Spleen (tissue), 13 donors: ENCODE measurements at regions of chr14 and their contacts with region 1.

Region 1: GRCh38 chr14:73467377-73467776 is 9.0 kb upstream of the NUMB start:
- DNase-seq: peak; percentile 86
- H3K4me3 ChIP-seq: peak overlapping the region in 1 of 8 donors; percentile 63
- H3K27ac ChIP-seq: peak overlapping the region in 6 of 8 donors; percentile 82 to 93 (median 88)
- H3K4me1 ChIP-seq: peaks cover 20 to 68% (median 48%) of the 10 kb centered on the region in 6 donors
- H3K27me3 ChIP-seq: no peaks in the 10 kb centered on the region
- CTCF ChIP-seq: no peak
- POLR2A ChIP-seq: no peak

Region 2: GRCh38 chr14:73295198-73295796 is 172.1 kb before region 1 on chr14:
- intact Hi-C with region 1: loop called (anchors 5 kb)
- DNase-seq: no peak
- H3K4me3 ChIP-seq: no peak overlapping the region
- H3K27ac ChIP-seq: no peak overlapping the region
- H3K4me1 ChIP-seq: peaks cover 0 to 4% (median 0%) of the 10 kb centered on the region in 6 donors
- H3K27me3 ChIP-seq: no peaks in the 10 kb centered on the region
- CTCF ChIP-seq: peak; percentile 27 to 80 (median 71)
- POLR2A ChIP-seq: no peak

Region 3: DNA sequence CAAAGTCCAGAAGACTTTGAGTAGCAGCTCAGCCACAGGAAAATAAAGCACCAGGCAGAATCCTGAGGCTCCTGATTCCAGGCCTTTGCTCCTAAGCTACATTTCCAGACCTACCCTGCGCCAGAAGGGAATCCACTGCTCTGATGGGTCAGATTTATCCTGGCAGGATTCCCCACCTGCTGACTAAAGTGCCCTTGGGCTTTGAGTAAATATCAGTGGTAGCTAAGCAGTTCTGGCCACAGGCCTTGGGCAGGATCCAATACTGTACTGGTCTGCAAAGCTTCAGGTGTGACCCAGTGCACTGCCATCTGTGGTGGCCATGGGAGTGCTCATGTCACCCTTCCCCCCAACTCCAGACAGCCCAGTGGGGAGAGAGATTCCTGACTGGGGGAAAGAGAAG is 59.2 kb after region 1 on chr14:
- intact Hi-C with region 1: no loop called
- DNase-seq: no peak
- H3K4me3 ChIP-seq: no peak overlapping the region
- H3K27ac ChIP-seq: no peak overlapping the region
- H3K4me1 ChIP-seq: no peaks in the 10 kb centered on the region
- H3K27me3 ChIP-seq: no peaks in the 10 kb centered on the region
- CTCF ChIP-seq: no peak
- POLR2A ChIP-seq: no peak